MCF 10A (cell line): ENCODE measurements at regions of chr1 and their contacts with region 1.

Region 1: GRCh38 chr1:95233737-95234500 is at the start of gene RWDD3:
- DNase-seq: peak; percentile 90
- H3K4me3 Mint-ChIP-seq: peak within 1 kb of the TSS; percentile 91
- H3K27ac Mint-ChIP-seq: peak within 1 kb of the TSS; percentile 87
- H3K4me1 Mint-ChIP-seq: peaks cover 18% of the 10 kb centered on the region
- H3K27me3 Mint-ChIP-seq: no peaks in the 10 kb centered on the region
- CTCF ChIP-seq: peak; percentile 89
- total RNA-seq, gene RWDD3: 10.3 and 14.7 TPM in 2 replicates

Region 2: GRCh38 chr1:94854458-94855306 is 379.2 kb before region 1 on chr1:
- CTCF ChIA-PET with region 1: interaction called, 10 read pairs
- POLR2A ChIA-PET with region 1: interaction called, 18 read pairs
- intact Hi-C with region 1: loop called (anchors 1 kb)
- DNase-seq: peak; percentile 97
- H3K4me3 Mint-ChIP-seq: no peak overlapping the region
- H3K27ac Mint-ChIP-seq: no peak overlapping the region
- H3K4me1 Mint-ChIP-seq: peaks cover 6% of the 10 kb centered on the region
- H3K27me3 Mint-ChIP-seq: no peaks in the 10 kb centered on the region
- CTCF ChIP-seq: peak; percentile 82

Region 3: DNA sequence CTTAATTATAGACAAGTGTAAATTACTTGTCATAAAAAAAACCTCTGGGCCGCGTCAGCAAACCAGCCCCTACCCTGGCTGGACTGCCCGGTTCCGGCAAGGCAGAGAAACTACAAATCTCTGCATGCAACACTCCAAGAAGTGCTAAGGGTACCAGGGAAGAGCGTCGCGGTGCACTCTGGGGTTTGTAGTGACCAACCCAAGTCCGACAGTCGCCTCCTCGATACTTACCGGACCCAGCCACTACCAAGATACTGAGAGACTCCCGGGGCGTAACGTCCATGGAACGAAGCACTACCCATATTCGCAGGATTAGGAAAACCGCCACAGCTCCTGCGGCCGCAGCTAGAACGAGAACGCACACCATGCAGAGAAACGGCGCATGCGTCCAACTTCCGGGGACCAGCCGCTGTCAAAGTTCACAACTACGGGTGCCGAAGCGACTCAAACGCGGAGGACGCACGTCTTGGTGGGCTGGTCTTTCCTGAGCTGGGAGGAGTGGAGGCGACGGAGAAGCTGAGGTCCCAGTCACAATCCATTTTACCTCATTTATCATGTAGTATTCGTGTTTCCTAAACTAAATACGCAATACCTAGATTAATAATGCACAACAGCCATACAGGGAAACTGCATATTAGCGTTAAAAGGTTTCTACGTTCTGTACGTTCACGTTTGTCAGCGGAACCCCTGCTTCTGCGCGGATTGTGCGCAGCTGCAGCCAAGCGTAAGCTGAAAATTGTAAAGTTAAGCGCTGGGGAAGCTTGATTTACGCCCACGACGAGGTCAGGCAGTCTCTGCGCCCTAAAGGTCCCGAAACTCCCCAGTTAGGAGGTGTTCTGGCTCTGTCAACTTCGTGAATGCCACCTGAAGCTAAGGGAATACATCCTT is 161.1 kb before region 1 on chr1 and contains the start of gene ALG14:
- CTCF ChIA-PET with region 1: interaction called, 16 read pairs
- POLR2A ChIA-PET with region 1: interaction called, 23 read pairs
- intact Hi-C with region 1: loop called (anchors 1 kb)
- DNase-seq: peak; percentile 94
- H3K4me3 Mint-ChIP-seq: peak within 1 kb of the TSS; percentile 84
- H3K27ac Mint-ChIP-seq: peak within 1 kb of the TSS; percentile 90
- H3K4me1 Mint-ChIP-seq: peaks cover 9% of the 10 kb centered on the region
- H3K27me3 Mint-ChIP-seq: no peaks in the 10 kb centered on the region
- CTCF ChIP-seq: no peak
- total RNA-seq, gene ALG14: 13.0 and 15.5 TPM in 2 replicates

Region 4: DNA sequence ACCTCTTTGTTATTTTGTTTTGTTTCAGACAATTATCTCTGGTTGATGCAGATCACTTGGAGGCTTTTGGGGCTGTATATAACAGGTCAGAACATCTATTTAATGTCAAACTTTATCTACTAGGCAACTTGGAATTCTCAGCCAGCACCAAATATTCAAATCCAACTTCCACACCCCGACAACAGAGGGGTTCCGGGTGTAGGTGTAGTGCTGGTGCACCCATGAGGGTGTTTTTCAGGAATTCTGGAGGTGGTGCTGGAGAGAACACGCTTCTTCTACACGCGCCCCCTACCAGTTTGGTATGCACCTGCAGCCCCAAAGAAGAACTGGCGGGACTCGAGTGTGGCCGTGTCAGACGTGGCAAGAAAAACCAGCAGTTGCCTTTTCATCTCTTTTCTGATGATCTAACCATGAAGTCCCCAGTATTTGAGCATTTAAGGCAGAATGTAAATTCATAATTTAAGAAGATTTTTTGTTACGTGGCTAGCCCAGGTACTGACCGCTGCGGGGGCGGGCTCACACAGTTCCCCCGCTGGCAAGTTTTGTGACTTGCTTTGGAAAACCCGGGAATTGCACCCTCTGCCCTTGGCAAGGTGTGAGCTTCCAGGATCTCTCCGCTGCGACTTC is 117.2 kb before region 1 on chr1:
- CTCF ChIA-PET with region 1: interaction called, 34 read pairs
- POLR2A ChIA-PET with region 1: interaction called, 32 read pairs
- intact Hi-C with region 1: loop called (anchors 1 kb)
- DNase-seq: peak; percentile 78
- H3K4me3 Mint-ChIP-seq: peak overlapping the region; percentile 77
- H3K27ac Mint-ChIP-seq: no peak overlapping the region
- H3K4me1 Mint-ChIP-seq: peaks cover 21% of the 10 kb centered on the region
- H3K27me3 Mint-ChIP-seq: no peaks in the 10 kb centered on the region
- CTCF ChIP-seq: peak; percentile 61

Region 5: DNA sequence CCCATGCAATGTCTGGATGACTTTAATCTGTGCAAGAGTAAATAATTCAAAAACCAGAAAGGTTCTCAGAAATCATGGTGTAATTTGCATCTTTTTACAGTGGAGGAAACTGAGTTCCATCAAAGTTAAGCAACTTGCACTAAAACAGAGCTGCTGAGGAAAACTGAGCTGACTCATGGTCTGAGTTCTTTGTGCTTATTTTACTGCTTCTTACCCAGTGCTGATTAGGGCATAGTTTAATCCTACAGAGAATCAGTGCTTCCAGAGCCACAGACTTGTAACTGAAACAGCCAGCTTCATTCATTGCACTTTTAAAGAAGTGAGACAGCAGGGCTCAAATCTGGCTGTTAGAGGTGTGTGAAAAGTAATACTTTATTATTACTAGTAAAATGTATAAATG is 10.8 kb before region 1 on chr1:
- CTCF ChIA-PET with region 1: interaction called, 15 read pairs
- POLR2A ChIA-PET with region 1: interaction called, 7 read pairs
- intact Hi-C with region 1: no loop called
- DNase-seq: peak; percentile 6
- H3K4me3 Mint-ChIP-seq: no peak overlapping the region
- H3K27ac Mint-ChIP-seq: no peak overlapping the region
- H3K4me1 Mint-ChIP-seq: no peaks in the 10 kb centered on the region
- H3K27me3 Mint-ChIP-seq: no peaks in the 10 kb centered on the region
- CTCF ChIP-seq: no peak

Region 6: GRCh38 chr1:95257758-95258157 is 23.8 kb after region 1 on chr1:
- CTCF ChIA-PET with region 1: no interaction called
- POLR2A ChIA-PET with region 1: no interaction called
- intact Hi-C with region 1: no loop called
- DNase-seq: no peak
- H3K4me3 Mint-ChIP-seq: no peak overlapping the region
- H3K27ac Mint-ChIP-seq: no peak overlapping the region
- H3K4me1 Mint-ChIP-seq: no peaks in the 10 kb centered on the region
- H3K27me3 Mint-ChIP-seq: no peaks in the 10 kb centered on the region
- CTCF ChIP-seq: no peak